ENCODE measurements at regions of chr7 and their contacts with region 1.

Region 1: GRCh38 chr7:76393116-76394031 is 16.1 kb downstream of the SSC4D start:
- DNase-seq: peak; percentile 77 to 95 (median 90)
- ATAC-seq: peak; percentile 83
- H3K4me3 ChIP-seq: peak overlapping the region; percentile 64 to 85
- H3K4me3 Mint-ChIP-seq: peak overlapping the region; percentile 86
- H3K27ac ChIP-seq: peak overlapping the region; percentile 69 to 70
- H3K27ac Mint-ChIP-seq: peak overlapping the region; percentile 82
- H3K4me1 ChIP-seq: peaks cover 20% of the 10 kb centered on the region
- H3K4me1 Mint-ChIP-seq: peaks cover 17% of the 10 kb centered on the region
- H3K27me3 ChIP-seq: no peaks in the 10 kb centered on the region
- H3K27me3 Mint-ChIP-seq: no peaks in the 10 kb centered on the region
- CTCF ChIP-seq: no peak

Region 2: GRCh38 chr7:76201730-76202665 is 191.4 kb before region 1 on chr7 and contains the start of gene SRRM3:
- CTCF ChIA-PET with region 1: no interaction called
- POLR2A ChIA-PET with region 1: no interaction called
- intact Hi-C with region 1: loop called in 1 of 2 experiments (anchors 2 kb)
- DNase-seq: peak; percentile 74 to 89 (median 81)
- ATAC-seq: peak; percentile 99
- H3K4me3 ChIP-seq: no peak within 1 kb of the TSS
- H3K4me3 Mint-ChIP-seq: no peak within 1 kb of the TSS
- H3K27ac ChIP-seq: no peak within 1 kb of the TSS
- H3K27ac Mint-ChIP-seq: no peak within 1 kb of the TSS
- H3K4me1 ChIP-seq: no peaks in the 10 kb centered on the region
- H3K4me1 Mint-ChIP-seq: no peaks in the 10 kb centered on the region
- H3K27me3 ChIP-seq: peaks cover 7 to 10% of the 10 kb centered on the region in 2 experiments
- H3K27me3 Mint-ChIP-seq: peaks cover 40% of the 10 kb centered on the region
- CTCF ChIP-seq: peak; percentile 56
- total RNA-seq, gene SRRM3: not detected

Region 3: DNA sequence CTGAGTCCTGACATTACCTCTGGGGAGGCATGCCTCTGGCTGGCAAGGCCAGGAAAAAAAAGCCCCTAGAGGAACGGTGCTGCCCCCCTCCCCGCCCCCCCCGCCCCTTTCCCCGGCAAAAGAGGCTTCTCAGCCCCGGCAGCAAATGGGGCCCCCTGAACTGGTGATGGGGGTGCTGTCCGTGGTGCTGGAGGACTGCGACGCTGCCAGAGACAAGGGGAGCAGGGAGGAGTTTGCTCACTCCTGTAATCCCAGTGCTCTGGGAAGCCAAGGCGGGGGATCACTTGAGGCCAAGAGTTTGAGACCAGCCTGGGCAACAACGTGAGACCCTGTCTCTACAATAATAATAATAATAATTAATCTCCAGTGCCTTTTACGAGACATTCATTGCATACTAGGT is 168.0 kb before region 1 on chr7:
- CTCF ChIA-PET with region 1: no interaction called
- POLR2A ChIA-PET with region 1: no interaction called
- intact Hi-C with region 1: no loop called
- DNase-seq: peak in 6 of 9 experiments; percentile 4 to 48 (median 36)
- ATAC-seq: peak; percentile 49
- H3K4me3 ChIP-seq: no peak overlapping the region
- H3K4me3 Mint-ChIP-seq: no peak overlapping the region
- H3K27ac ChIP-seq: no peak overlapping the region
- H3K27ac Mint-ChIP-seq: no peak overlapping the region
- H3K4me1 ChIP-seq: no peaks in the 10 kb centered on the region
- H3K4me1 Mint-ChIP-seq: no peaks in the 10 kb centered on the region
- H3K27me3 ChIP-seq: peaks cover 3 to 4% of the 10 kb centered on the region in 2 experiments
- H3K27me3 Mint-ChIP-seq: peaks cover 46% of the 10 kb centered on the region
- CTCF ChIP-seq: no peak

Region 4: DNA sequence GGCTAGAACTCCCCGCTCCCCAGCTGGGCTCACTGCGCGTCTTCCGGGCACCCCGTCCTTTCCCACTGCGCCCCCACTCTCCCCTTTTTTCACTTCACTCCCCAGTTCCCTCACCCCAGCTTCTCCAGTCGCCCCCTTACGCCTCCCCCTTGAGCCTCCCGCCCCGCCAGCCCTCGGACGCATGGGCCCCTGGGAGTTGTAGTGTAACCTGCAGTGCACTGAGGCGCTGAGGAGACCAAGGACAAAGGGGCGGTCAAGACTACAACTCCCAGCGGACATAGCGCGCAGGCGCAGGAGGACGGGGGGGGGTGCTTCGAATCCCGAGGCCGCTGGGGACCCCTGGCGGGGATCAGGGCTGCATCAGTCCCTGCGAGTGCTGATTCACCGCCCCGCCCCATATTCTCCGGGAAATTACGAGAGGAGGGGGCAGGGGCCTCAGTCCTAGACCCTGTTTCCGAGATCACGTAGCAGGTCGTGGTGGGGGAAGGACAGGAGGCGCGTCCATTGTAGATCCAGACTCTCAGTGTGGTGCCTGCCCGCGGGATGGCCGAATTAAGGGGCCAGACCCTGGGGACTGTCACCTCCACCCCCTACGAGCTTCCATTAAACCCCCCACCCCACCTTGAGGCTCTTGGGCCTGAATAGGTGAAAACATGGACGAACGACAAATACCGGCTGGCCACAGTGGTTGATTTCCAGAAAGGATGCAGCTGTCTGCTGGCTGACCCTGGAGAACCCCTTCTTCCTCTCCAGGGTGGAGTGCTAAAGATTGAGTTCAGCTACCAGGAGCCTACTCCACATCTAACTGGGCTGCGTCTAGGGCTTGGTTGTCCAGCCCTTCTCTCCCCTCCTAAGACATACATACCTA is 34.0 kb before region 1 on chr7:
- CTCF ChIA-PET with region 1: interaction called, 3 read pairs
- POLR2A ChIA-PET with region 1: interaction called, 10 read pairs
- intact Hi-C with region 1: loop called (anchors 1 to 2 kb)
- DNase-seq: peak; percentile 86 to 98 (median 95)
- ATAC-seq: peak; percentile 90
- H3K4me3 ChIP-seq: peak overlapping the region; percentile 94 to 99
- H3K4me3 Mint-ChIP-seq: peak overlapping the region; percentile 96
- H3K27ac ChIP-seq: peak overlapping the region; percentile 96
- H3K27ac Mint-ChIP-seq: peak overlapping the region; percentile 94
- H3K4me1 ChIP-seq: peaks cover 28% of the 10 kb centered on the region
- H3K4me1 Mint-ChIP-seq: peaks cover 39% of the 10 kb centered on the region
- H3K27me3 ChIP-seq: no peaks in the 10 kb centered on the region
- H3K27me3 Mint-ChIP-seq: no peaks in the 10 kb centered on the region
- CTCF ChIP-seq: peak; percentile 54

Region 5: GRCh38 chr7:76383089-76383944 is 10.1 kb before region 1 on chr7:
- CTCF ChIA-PET with region 1: no interaction called
- POLR2A ChIA-PET with region 1: no interaction called
- intact Hi-C with region 1: loop called in 1 of 2 experiments (anchors 1 kb)
- DNase-seq: no peak
- ATAC-seq: no peak
- H3K4me3 ChIP-seq: no peak overlapping the region
- H3K4me3 Mint-ChIP-seq: no peak overlapping the region
- H3K27ac ChIP-seq: no peak overlapping the region
- H3K27ac Mint-ChIP-seq: no peak overlapping the region
- H3K4me1 ChIP-seq: no peaks in the 10 kb centered on the region
- H3K4me1 Mint-ChIP-seq: peaks cover 4% of the 10 kb centered on the region
- H3K27me3 ChIP-seq: no peaks in the 10 kb centered on the region
- H3K27me3 Mint-ChIP-seq: no peaks in the 10 kb centered on the region
- CTCF ChIP-seq: no peak